ENCODE measurements at regions of chr11 and their contacts with region 1.

Region 1: GRCh38 chr11:128354476-128354875 is 232.9 kb downstream of the ETS1 start:
- DNase-seq: no peak
- ATAC-seq: no peak
- H3K4me3 ChIP-seq: no peak overlapping the region
- H3K4me3 Mint-ChIP-seq: no peak overlapping the region
- H3K27ac ChIP-seq: no peak overlapping the region
- H3K27ac Mint-ChIP-seq: no peak overlapping the region
- H3K4me1 ChIP-seq: peaks cover 9 to 29% of the 10 kb centered on the region in 2 donors
- H3K4me1 Mint-ChIP-seq: peaks cover 18 to 78% (median 67%) of the 10 kb centered on the region in 7 donors
- H3K27me3 ChIP-seq: no peaks in the 10 kb centered on the region
- H3K27me3 Mint-ChIP-seq: peaks cover 0 to 4% (median 0%) of the 10 kb centered on the region in 5 donors

Region 2: DNA sequence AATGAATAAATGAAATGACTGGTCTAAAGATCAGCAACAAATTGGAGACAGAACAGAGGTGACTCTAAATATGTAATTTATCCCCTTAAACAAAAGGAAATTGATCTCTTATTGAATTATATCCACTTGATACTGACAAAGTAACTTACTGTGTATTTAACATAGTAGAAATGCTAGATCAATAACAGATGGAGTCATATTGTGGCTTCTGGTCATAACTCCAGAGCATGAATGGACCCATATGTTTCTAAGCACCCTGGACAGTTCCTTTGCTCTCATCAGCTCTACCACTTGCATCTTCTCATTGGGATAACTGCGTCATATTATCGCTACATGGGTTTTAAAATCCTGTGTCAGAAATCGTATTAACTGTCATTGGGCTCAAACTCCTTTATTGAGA is 10.6 kb after region 1 on chr11:
- CTCF ChIA-PET with region 1: interaction called, 3 read pairs
- POLR2A ChIA-PET with region 1: interaction called, 27 read pairs
- intact Hi-C with region 1: loop called in 1 of 2 experiments (anchors 2 kb)
- DNase-seq: peak in 5 of 9 donors; percentile 17 to 48 (median 45)
- ATAC-seq: no peak
- H3K4me3 ChIP-seq: no peak overlapping the region
- H3K4me3 Mint-ChIP-seq: no peak overlapping the region
- H3K27ac ChIP-seq: no peak overlapping the region
- H3K27ac Mint-ChIP-seq: peak overlapping the region in 2 of 9 donors; percentile 40 to 85
- H3K4me1 ChIP-seq: no peaks in the 10 kb centered on the region
- H3K4me1 Mint-ChIP-seq: peaks cover 8 to 47% (median 37%) of the 10 kb centered on the region in 7 donors
- H3K27me3 ChIP-seq: no peaks in the 10 kb centered on the region
- H3K27me3 Mint-ChIP-seq: peaks cover 0 to 5% (median 0%) of the 10 kb centered on the region in 5 donors

Region 3: DNA sequence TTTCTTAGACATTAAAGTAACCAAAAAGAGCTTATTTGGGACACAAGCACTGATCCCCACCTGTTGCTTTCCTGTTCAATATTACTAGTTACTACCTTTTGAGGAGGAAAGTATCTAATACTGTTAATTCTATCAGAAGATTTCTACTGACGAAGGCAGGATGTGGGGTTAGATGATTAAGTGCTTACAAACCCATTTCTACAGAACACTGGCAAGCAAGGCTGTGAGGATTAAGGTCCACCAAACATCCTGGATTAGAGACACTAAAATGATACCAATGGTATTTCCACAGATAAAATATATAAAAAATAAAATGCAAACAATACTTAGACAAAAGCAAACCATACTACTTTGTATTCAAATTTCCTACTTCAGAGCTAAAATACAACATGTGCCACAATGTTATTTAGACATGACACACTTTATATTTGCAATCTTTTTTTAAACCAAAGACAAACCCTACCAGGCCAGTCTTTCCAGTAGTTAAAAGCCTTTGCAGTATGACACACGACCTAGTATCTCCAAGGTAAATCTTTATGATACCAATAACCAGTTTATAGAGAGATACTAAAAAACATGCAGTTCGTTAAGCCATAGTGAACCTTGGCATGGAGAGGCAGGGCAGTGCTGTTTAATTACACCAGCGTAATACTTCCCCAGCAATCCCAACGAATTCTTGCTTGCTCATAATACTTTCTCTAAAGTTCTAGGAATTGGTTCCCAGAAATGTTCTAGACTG is 659.4 kb after region 1 on chr11:
- CTCF ChIA-PET with region 1: no interaction called
- POLR2A ChIA-PET with region 1: no interaction called
- intact Hi-C with region 1: no loop called
- DNase-seq: no peak
- ATAC-seq: no peak
- H3K4me3 ChIP-seq: no peak overlapping the region
- H3K4me3 Mint-ChIP-seq: no peak overlapping the region
- H3K27ac ChIP-seq: no peak overlapping the region
- H3K27ac Mint-ChIP-seq: no peak overlapping the region
- H3K4me1 ChIP-seq: no peaks in the 10 kb centered on the region
- H3K4me1 Mint-ChIP-seq: peaks cover 0 to 1% (median 0%) of the 10 kb centered on the region in 7 donors
- H3K27me3 ChIP-seq: no peaks in the 10 kb centered on the region
- H3K27me3 Mint-ChIP-seq: peaks cover 0 to 3% (median 0%) of the 10 kb centered on the region in 5 donors

Region 4: GRCh38 chr11:129230006-129230405 is 875.5 kb after region 1 on chr11:
- CTCF ChIA-PET with region 1: no interaction called
- POLR2A ChIA-PET with region 1: no interaction called
- intact Hi-C with region 1: no loop called
- DNase-seq: peak in 3 of 9 donors; percentile 2 to 36 (median 15)
- ATAC-seq: no peak
- H3K4me3 ChIP-seq: no peak overlapping the region
- H3K4me3 Mint-ChIP-seq: no peak overlapping the region
- H3K27ac ChIP-seq: no peak overlapping the region
- H3K27ac Mint-ChIP-seq: no peak overlapping the region
- H3K4me1 ChIP-seq: no peaks in the 10 kb centered on the region
- H3K4me1 Mint-ChIP-seq: no peaks in the 10 kb centered on the region
- H3K27me3 ChIP-seq: no peaks in the 10 kb centered on the region
- H3K27me3 Mint-ChIP-seq: peaks cover 0 to 7% (median 0%) of the 10 kb centered on the region in 5 donors